ENCODE measurements at regions of chr14 and their contacts with region 1.

Region 1: DNA sequence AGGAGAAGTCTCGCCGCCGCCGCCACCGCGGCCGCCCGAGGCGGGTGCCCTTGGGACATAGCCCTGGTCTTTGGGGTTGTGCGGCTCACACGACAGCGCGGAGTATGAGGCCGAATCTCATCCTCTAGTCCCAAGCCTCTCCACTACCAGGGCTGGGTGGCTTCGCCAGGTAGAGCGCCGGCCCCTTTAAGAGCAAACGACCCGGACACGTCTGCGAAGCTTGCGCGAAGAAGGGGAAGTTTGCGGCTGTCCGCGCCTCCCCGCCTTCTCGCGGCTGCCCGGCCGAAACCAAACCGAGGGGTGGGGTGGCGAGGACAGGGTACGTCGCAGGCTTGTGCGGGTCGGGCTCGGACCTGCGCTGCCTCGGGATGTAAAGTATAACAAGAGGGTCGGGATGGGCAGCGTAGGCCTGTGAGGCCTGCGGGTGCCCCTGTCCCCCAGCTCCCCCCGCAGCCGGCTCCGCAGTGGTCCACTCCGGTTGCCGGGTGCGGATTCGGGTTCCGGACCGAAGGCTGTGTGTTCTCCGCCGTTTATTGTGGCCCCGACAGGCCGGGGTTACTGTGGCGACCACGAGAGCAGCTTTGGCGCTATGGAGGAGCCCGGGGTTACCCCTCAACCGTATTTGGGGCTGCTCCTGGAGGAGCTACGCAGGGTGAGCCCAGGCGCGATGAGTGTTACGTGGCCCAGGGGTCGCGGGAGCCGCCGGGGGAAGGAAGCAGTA is 33.3 kb downstream of the MIA2 start:
- DNase-seq: peak; percentile 65 to 77 (median 71)
- ATAC-seq: peak; percentile 87
- H3K4me3 ChIP-seq: peak overlapping the region; percentile 86
- H3K4me3 Mint-ChIP-seq: peak overlapping the region; percentile 76 to 100 (median 95)
- H3K27ac ChIP-seq: peak overlapping the region; percentile 94
- H3K27ac Mint-ChIP-seq: peak overlapping the region; percentile 88 to 98 (median 96)
- H3K4me1 ChIP-seq: peaks cover 17 to 29% of the 10 kb centered on the region in 2 donors
- H3K4me1 Mint-ChIP-seq: peaks cover 47 to 62% (median 58%) of the 10 kb centered on the region in 7 donors
- H3K27me3 ChIP-seq: no peaks in the 10 kb centered on the region
- H3K27me3 Mint-ChIP-seq: no peaks in the 10 kb centered on the region

Region 2: DNA sequence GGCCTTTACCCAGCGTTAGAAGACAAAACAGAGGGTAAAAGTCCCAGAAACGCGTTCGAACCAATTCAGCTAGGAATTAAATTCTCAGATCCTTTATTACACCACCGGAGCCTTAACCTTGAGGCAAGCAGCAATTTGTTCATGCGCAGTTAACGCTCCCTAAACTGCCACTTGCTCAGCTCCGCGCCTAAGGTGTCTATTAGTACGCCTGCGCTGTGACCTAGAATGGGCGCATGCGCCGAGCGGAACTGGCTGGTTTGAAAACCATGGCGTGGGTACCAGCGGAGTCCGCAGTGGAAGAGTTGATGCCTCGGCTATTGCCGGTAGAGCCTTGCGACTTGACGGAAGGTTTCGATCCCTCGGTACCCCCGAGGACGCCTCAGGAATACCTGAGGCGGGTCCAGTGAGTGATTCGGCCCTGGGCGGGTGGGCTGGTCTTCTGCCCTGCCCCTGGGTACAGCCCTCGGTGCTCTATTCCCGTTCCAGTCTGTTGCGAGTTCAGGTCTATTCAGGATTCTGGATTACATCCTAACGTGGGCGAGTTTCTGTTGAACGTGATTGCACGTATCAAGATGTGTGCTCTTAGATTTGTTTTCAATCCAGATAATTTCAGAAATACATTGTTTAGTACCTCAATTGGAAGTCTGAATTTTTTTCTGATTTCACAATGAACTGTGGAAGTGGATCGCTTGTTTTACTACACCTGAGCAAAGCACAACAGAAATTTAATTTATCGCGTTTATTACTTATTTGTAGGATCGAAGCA is 152.8 kb before region 1 on chr14 and contains the start of gene GEMIN2:
- CTCF ChIA-PET with region 1: no interaction called
- POLR2A ChIA-PET with region 1: interaction called, 14 read pairs
- intact Hi-C with region 1: loop called (anchors 1 kb)
- DNase-seq: peak; percentile 88 to 95 (median 92)
- ATAC-seq: peak; percentile 99
- H3K4me3 ChIP-seq: peak within 1 kb of the TSS; percentile 68
- H3K4me3 Mint-ChIP-seq: peak within 1 kb of the TSS; percentile 89 to 99 (median 97)
- H3K27ac ChIP-seq: peak within 1 kb of the TSS; percentile 80
- H3K27ac Mint-ChIP-seq: peak within 1 kb of the TSS; percentile 81 to 98 (median 94)
- H3K4me1 ChIP-seq: peaks cover 12 to 13% of the 10 kb centered on the region in 2 donors
- H3K4me1 Mint-ChIP-seq: peaks cover 10 to 36% (median 24%) of the 10 kb centered on the region in 7 donors
- H3K27me3 ChIP-seq: no peaks in the 10 kb centered on the region
- H3K27me3 Mint-ChIP-seq: peaks cover 0 to 3% (median 0%) of the 10 kb centered on the region in 5 donors
- total RNA-seq, gene GEMIN2: 7.2 to 20.9 (median 18.6) TPM

Region 3: GRCh38 chr14:39169541-39169900 is 97.5 kb before region 1 on chr14:
- CTCF ChIA-PET with region 1: interaction called, 3 read pairs
- POLR2A ChIA-PET with region 1: interaction called, 32 read pairs
- intact Hi-C with region 1: loop called (anchors 1 kb)
- DNase-seq: no peak
- ATAC-seq: no peak
- H3K4me3 ChIP-seq: peak overlapping the region; percentile 88
- H3K4me3 Mint-ChIP-seq: peak overlapping the region; percentile 88 to 100 (median 92)
- H3K27ac ChIP-seq: peak overlapping the region; percentile 98
- H3K27ac Mint-ChIP-seq: peak overlapping the region; percentile 90 to 99 (median 98)
- H3K4me1 ChIP-seq: peaks cover 20 to 31% of the 10 kb centered on the region in 2 donors
- H3K4me1 Mint-ChIP-seq: peaks cover 16 to 70% (median 59%) of the 10 kb centered on the region in 7 donors
- H3K27me3 ChIP-seq: no peaks in the 10 kb centered on the region
- H3K27me3 Mint-ChIP-seq: no peaks in the 10 kb centered on the region

Region 4: GRCh38 chr14:39174560-39175444 is 92.2 kb before region 1 on chr14 and contains the start of gene PNN:
- CTCF ChIA-PET with region 1: interaction called, 3 read pairs
- POLR2A ChIA-PET with region 1: interaction called, 32 read pairs
- intact Hi-C with region 1: loop called (anchors 1 kb)
- DNase-seq: peak; percentile 83 to 99 (median 98)
- ATAC-seq: peak; percentile 94
- H3K4me3 ChIP-seq: peak within 1 kb of the TSS; percentile 80
- H3K4me3 Mint-ChIP-seq: peak within 1 kb of the TSS; percentile 95 to 100 (median 99)
- H3K27ac ChIP-seq: peak within 1 kb of the TSS; percentile 90
- H3K27ac Mint-ChIP-seq: peak within 1 kb of the TSS; percentile 96 to 100 (median 99)
- H3K4me1 ChIP-seq: peaks cover 16 to 28% of the 10 kb centered on the region in 2 donors
- H3K4me1 Mint-ChIP-seq: peaks cover 27 to 74% (median 50%) of the 10 kb centered on the region in 7 donors
- H3K27me3 ChIP-seq: no peaks in the 10 kb centered on the region
- H3K27me3 Mint-ChIP-seq: no peaks in the 10 kb centered on the region
- total RNA-seq, gene PNN: 80.1 to 120 (median 102) TPM

Region 5: DNA sequence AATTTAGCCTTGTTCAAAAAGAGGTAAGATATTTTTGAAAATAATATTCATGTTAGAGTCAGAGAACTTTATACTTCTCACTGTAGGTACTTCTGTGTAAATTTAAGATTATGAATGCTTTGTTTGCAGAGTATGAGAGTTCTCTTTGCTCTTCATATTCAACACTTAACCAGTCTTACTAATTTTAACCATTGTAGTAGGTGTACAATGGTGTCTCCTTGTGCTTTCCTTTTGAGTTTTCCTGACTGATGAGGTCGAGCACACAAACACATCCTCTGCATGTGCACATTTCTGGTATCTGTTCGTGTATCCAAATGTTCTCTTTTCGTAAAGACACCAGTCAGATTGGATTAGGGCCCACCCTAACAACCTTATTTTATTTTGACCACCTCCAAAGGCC is 12.5 kb after region 1 on chr14:
- CTCF ChIA-PET with region 1: no interaction called
- POLR2A ChIA-PET with region 1: interaction called, 3 read pairs
- intact Hi-C with region 1: loop called in 1 of 2 experiments (anchors 2 kb)
- DNase-seq: no peak
- ATAC-seq: no peak
- H3K4me3 ChIP-seq: no peak overlapping the region
- H3K4me3 Mint-ChIP-seq: no peak overlapping the region
- H3K27ac ChIP-seq: no peak overlapping the region
- H3K27ac Mint-ChIP-seq: peak overlapping the region in 6 of 9 donors; percentile 1 to 83 (median 28)
- H3K4me1 ChIP-seq: no peaks in the 10 kb centered on the region
- H3K4me1 Mint-ChIP-seq: peaks cover 18 to 49% (median 45%) of the 10 kb centered on the region in 7 donors
- H3K27me3 ChIP-seq: no peaks in the 10 kb centered on the region
- H3K27me3 Mint-ChIP-seq: no peaks in the 10 kb centered on the region

Region 6: GRCh38 chr14:39302124-39302810 is 35.2 kb after region 1 on chr14:
- CTCF ChIA-PET with region 1: no interaction called
- POLR2A ChIA-PET with region 1: interaction called, 3 read pairs
- intact Hi-C with region 1: loop called in 1 of 2 experiments (anchors 5 kb)
- DNase-seq: no peak
- ATAC-seq: no peak
- H3K4me3 ChIP-seq: no peak overlapping the region
- H3K4me3 Mint-ChIP-seq: no peak overlapping the region
- H3K27ac ChIP-seq: no peak overlapping the region
- H3K27ac Mint-ChIP-seq: no peak overlapping the region
- H3K4me1 ChIP-seq: no peaks in the 10 kb centered on the region
- H3K4me1 Mint-ChIP-seq: peaks cover 0 to 5% (median 2%) of the 10 kb centered on the region in 7 donors
- H3K27me3 ChIP-seq: no peaks in the 10 kb centered on the region
- H3K27me3 Mint-ChIP-seq: no peaks in the 10 kb centered on the region

Measured in naive thymus-derived CD4-positive, alpha-beta T cell (primary cell).